ENCODE measurements at regions of chr2 and their contacts with region 1.

Region 1: GRCh38 chr2:53970724-53971602 is at the start of gene PSME4:
- DNase-seq: peak; percentile 95
- H3K4me3 Mint-ChIP-seq: peak within 1 kb of the TSS; percentile 83
- H3K27ac Mint-ChIP-seq: peak within 1 kb of the TSS; percentile 87
- H3K4me1 Mint-ChIP-seq: peaks cover 41% of the 10 kb centered on the region
- H3K27me3 Mint-ChIP-seq: no peaks in the 10 kb centered on the region
- total RNA-seq, gene PSME4: 47.4 to 47.8 TPM

Region 2: GRCh38 chr2:53786705-53787612 is 184.0 kb before region 1 on chr2 and contains the starts of genes ASB3 and ERLEC1:
- CTCF ChIA-PET with region 1: no interaction called
- POLR2A ChIA-PET with region 1: interaction called, 12 read pairs
- DNase-seq: peak; percentile 92
- H3K4me3 Mint-ChIP-seq: peak within 1 kb of the TSS; percentile 93
- H3K27ac Mint-ChIP-seq: peak within 1 kb of the TSS; percentile 88
- H3K4me1 Mint-ChIP-seq: peaks cover 51% of the 10 kb centered on the region
- H3K27me3 Mint-ChIP-seq: no peaks in the 10 kb centered on the region
- total RNA-seq, gene ASB3: 27.6 to 29.5 TPM
- total RNA-seq, gene ERLEC1: 32.6 to 33.3 TPM

Region 3: GRCh38 chr2:53989210-53989853 is 18.4 kb after region 1 on chr2:
- CTCF ChIA-PET with region 1: interaction called, 9 read pairs
- POLR2A ChIA-PET with region 1: interaction called, 57 read pairs
- DNase-seq: no peak
- H3K4me3 Mint-ChIP-seq: no peak overlapping the region
- H3K27ac Mint-ChIP-seq: no peak overlapping the region
- H3K4me1 Mint-ChIP-seq: peaks cover 28% of the 10 kb centered on the region
- H3K27me3 Mint-ChIP-seq: no peaks in the 10 kb centered on the region

Region 4: GRCh38 chr2:54000524-54000923 is 29.6 kb after region 1 on chr2:
- CTCF ChIA-PET with region 1: interaction called, 9 read pairs
- POLR2A ChIA-PET with region 1: interaction called, 57 read pairs
- DNase-seq: no peak
- H3K4me3 Mint-ChIP-seq: no peak overlapping the region
- H3K27ac Mint-ChIP-seq: no peak overlapping the region
- H3K4me1 Mint-ChIP-seq: no peaks in the 10 kb centered on the region
- H3K27me3 Mint-ChIP-seq: no peaks in the 10 kb centered on the region

Region 5: GRCh38 chr2:54041135-54041534 is 70.2 kb after region 1 on chr2:
- CTCF ChIA-PET with region 1: no interaction called
- POLR2A ChIA-PET with region 1: interaction called, 11 read pairs
- DNase-seq: peak; percentile 58
- H3K4me3 Mint-ChIP-seq: no peak overlapping the region
- H3K27ac Mint-ChIP-seq: no peak overlapping the region
- H3K4me1 Mint-ChIP-seq: no peaks in the 10 kb centered on the region
- H3K27me3 Mint-ChIP-seq: no peaks in the 10 kb centered on the region

Region 6: GRCh38 chr2:54059986-54060385 is 89.0 kb after region 1 on chr2:
- CTCF ChIA-PET with region 1: no interaction called
- POLR2A ChIA-PET with region 1: no interaction called
- DNase-seq: no peak
- H3K4me3 Mint-ChIP-seq: no peak overlapping the region
- H3K27ac Mint-ChIP-seq: no peak overlapping the region
- H3K4me1 Mint-ChIP-seq: peaks cover 2% of the 10 kb centered on the region
- H3K27me3 Mint-ChIP-seq: no peaks in the 10 kb centered on the region

Region 7: DNA sequence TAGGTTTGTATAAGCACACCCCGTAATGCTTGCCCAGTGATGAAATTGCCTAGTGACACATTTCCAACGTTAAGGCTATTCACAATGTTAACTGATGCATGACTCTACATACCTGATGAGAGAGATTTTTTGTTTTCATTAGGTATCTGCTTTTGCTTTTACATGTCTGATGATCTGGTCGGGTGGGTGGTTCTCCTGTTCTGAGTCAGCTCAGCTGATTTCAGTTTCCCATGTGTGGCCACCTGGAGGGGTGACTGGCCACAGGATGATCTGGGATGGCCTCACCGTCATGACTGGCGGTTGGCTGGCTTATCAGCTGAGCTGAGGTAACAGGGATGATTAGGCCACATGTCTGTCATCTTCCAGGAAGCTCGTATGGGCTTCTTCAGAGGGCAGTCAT is 110.6 kb after region 1 on chr2:
- CTCF ChIA-PET with region 1: no interaction called
- POLR2A ChIA-PET with region 1: interaction called, 11 read pairs
- DNase-seq: peak; percentile 70
- H3K4me3 Mint-ChIP-seq: no peak overlapping the region
- H3K27ac Mint-ChIP-seq: peak overlapping the region; percentile 47
- H3K4me1 Mint-ChIP-seq: peaks cover 25% of the 10 kb centered on the region
- H3K27me3 Mint-ChIP-seq: no peaks in the 10 kb centered on the region

Region 8: GRCh38 chr2:54240515-54241469 is 269.8 kb after region 1 on chr2:
- CTCF ChIA-PET with region 1: no interaction called
- POLR2A ChIA-PET with region 1: no interaction called
- DNase-seq: no peak
- H3K4me3 Mint-ChIP-seq: no peak overlapping the region
- H3K27ac Mint-ChIP-seq: no peak overlapping the region
- H3K4me1 Mint-ChIP-seq: no peaks in the 10 kb centered on the region
- H3K27me3 Mint-ChIP-seq: no peaks in the 10 kb centered on the region